T-cell (primary cell): ENCODE measurements at regions of chr3 and their contacts with region 1.

Region 1: GRCh38 chr3:138909904-138910303 is 37.0 kb downstream of the FOXL2 start:
- DNase-seq: no peak
- ATAC-seq: no peak
- H3K4me3 ChIP-seq: no peak overlapping the region
- H3K4me3 Mint-ChIP-seq: no peak overlapping the region
- H3K27ac ChIP-seq: no peak overlapping the region
- H3K27ac Mint-ChIP-seq: no peak overlapping the region
- H3K4me1 ChIP-seq: peaks cover 0 to 2% of the 10 kb centered on the region in 2 experiments
- H3K4me1 Mint-ChIP-seq: peaks cover under 1 to 1% (median 1%) of the 10 kb centered on the region in 3 donors
- H3K27me3 ChIP-seq: no peaks in the 10 kb centered on the region
- H3K27me3 Mint-ChIP-seq: no peaks in the 10 kb centered on the region

Region 2: GRCh38 chr3:138542977-138543376 is 366.9 kb before region 1 on chr3:
- CTCF ChIA-PET with region 1: no interaction called
- POLR2A ChIA-PET with region 1: no interaction called
- DNase-seq: no peak
- ATAC-seq: no peak
- H3K4me3 ChIP-seq: no peak overlapping the region
- H3K4me3 Mint-ChIP-seq: no peak overlapping the region
- H3K27ac ChIP-seq: no peak overlapping the region
- H3K27ac Mint-ChIP-seq: no peak overlapping the region
- H3K4me1 ChIP-seq: no peaks in the 10 kb centered on the region
- H3K4me1 Mint-ChIP-seq: no peaks in the 10 kb centered on the region
- H3K27me3 ChIP-seq: no peaks in the 10 kb centered on the region
- H3K27me3 Mint-ChIP-seq: no peaks in the 10 kb centered on the region

Region 3: DNA sequence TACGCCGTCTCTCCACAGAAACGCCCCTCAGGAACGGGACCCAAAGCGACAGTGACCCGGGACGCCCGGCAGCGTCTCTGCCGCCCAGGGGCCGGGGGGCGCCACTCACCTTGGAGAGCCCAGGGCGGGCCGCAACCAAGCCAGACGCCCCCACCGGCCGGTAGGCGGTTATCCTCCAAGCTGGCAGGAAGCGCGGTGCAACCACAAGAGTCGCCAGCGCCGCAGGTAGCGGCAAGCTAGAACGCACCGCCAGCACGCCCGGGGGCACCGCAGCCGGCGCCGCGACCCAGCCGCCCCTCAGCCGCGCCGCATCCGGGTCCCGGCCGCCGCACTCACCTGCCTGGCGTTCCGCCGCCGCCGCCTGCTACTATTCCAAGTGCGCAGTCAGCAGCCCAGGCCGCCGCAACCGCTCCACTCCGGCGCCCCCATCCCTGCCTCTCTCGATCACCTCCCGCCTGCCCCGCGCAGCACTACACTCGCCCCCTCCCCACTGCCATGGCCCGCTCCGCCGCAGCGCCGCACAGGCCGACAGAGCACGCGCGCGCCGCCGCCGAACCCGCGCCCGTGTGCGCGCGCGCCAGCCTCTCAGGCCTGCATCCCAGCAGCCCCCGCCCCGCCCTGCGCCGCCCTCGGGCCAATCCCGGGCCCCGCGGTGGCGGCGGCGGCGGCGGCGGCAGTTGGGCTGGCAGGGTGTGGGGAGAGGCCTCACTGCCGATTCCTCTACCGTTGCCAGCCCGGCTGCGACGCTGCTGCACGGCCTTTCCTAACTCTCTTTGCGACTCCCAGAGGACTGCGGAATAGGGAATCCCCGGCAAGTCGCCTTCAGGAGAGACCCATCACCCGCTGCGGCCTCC is 75.3 kb before region 1 on chr3 and contains the start of gene PIK3CB:
- CTCF ChIA-PET with region 1: no interaction called
- POLR2A ChIA-PET with region 1: interaction called, 5 to 13 read pairs
- DNase-seq: peak; percentile 75 to 93 (median 85)
- ATAC-seq: peak; percentile 90 to 95 (median 94)
- H3K4me3 ChIP-seq: peak within 1 kb of the TSS; percentile 84 to 91
- H3K4me3 Mint-ChIP-seq: peak within 1 kb of the TSS; percentile 91 to 97 (median 96)
- H3K27ac ChIP-seq: peak within 1 kb of the TSS; percentile 90
- H3K27ac Mint-ChIP-seq: peak within 1 kb of the TSS; percentile 98 to 99
- H3K4me1 ChIP-seq: peaks cover 9 to 30% of the 10 kb centered on the region in 2 experiments
- H3K4me1 Mint-ChIP-seq: peaks cover 27 to 36% (median 31%) of the 10 kb centered on the region in 3 donors
- H3K27me3 ChIP-seq: no peaks in the 10 kb centered on the region
- H3K27me3 Mint-ChIP-seq: no peaks in the 10 kb centered on the region
- total RNA-seq, gene PIK3CB: 25.2 to 34.4 (median 30.9) TPM

Region 4: DNA sequence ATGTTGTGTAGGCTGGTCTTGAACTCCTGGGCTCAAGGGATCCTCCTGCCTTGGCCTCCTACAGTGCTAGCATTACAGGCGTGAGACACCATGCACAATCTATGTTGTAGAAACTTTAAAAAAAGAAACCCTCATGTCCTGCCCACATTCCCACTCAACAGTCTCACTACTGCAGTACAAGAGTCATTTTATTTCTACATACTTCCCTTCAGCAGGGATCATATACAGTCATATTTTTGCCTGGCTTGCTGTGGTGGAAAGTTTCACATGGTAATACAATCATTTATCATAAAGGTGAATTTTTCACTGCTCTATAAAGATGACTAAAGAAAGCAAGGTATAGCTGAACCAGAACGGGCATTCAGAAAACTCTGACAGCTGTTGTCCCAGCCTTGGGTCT is 21.3 kb before region 1 on chr3:
- CTCF ChIA-PET with region 1: no interaction called
- POLR2A ChIA-PET with region 1: no interaction called
- DNase-seq: no peak
- ATAC-seq: no peak
- H3K4me3 ChIP-seq: no peak overlapping the region
- H3K4me3 Mint-ChIP-seq: no peak overlapping the region
- H3K27ac ChIP-seq: no peak overlapping the region
- H3K27ac Mint-ChIP-seq: no peak overlapping the region
- H3K4me1 ChIP-seq: no peaks in the 10 kb centered on the region
- H3K4me1 Mint-ChIP-seq: peaks cover 0 to 4% (median 3%) of the 10 kb centered on the region in 3 donors
- H3K27me3 ChIP-seq: peaks cover 0 to 11% of the 10 kb centered on the region in 2 experiments
- H3K27me3 Mint-ChIP-seq: peaks cover 5 to 9% of the 10 kb centered on the region in 2 donors